ENCODE measurements at regions of chr3 and their contacts with region 1.

Region 1: DNA sequence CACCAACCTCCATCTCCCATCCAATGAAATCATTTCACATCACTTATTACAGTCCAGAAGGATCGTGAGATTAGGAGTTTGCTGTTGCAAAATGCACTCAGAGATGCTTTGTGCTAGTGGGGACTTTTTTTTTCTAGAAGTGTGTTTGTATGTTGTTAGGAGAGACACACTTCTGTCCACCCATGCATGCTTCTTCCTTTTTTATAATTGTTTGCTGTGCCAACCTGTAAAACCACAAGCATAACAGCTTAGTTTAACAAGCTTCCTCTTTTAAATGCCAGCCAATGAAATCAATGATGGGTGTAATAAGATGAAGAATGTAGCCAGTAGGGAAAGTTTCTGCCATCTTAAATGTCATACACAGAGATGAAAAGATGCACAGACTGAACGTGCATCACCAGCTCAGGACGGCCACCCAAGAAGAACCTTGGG is 305.6 kb upstream of the STT3B start:
- DNase-seq: peak; percentile 96
- H3K4me3 ChIP-seq: peak overlapping the region; percentile 57
- H3K27ac ChIP-seq: peak overlapping the region; percentile 100
- H3K4me1 ChIP-seq: peaks cover 98% of the 10 kb centered on the region
- CTCF ChIP-seq: no peak

Region 2: DNA sequence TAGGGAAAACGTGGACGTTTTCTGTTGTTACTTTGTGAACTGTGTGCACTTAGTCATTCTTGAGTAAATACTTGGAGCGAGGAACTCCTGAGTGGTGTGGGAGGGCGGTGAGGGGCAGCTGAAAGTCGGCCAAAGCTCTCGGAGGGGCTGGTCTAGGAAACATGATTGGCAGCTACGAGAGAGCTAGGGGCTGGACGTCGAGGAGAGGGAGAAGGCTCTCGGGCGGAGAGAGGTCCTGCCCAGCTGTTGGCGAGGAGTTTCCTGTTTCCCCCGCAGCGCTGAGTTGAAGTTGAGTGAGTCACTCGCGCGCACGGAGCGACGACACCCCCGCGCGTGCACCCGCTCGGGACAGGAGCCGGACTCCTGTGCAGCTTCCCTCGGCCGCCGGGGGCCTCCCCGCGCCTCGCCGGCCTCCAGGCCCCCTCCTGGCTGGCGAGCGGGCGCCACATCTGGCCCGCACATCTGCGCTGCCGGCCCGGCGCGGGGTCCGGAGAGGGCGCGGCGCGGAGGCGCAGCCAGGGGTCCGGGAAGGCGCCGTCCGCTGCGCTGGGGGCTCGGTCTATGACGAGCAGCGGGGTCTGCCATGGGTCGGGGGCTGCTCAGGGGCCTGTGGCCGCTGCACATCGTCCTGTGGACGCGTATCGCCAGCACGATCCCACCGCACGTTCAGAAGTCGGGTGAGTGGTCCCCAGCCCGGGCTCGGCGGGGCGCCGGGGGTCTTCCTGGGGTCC is 620.7 kb before region 1 on chr3 and contains the start of gene TGFBR2:
- CTCF ChIA-PET with region 1: no interaction called
- POLR2A ChIA-PET with region 1: interaction called, 3 read pairs
- intact Hi-C with region 1: loop called (anchors 10 kb)
- DNase-seq: peak; percentile 91
- H3K4me3 ChIP-seq: peak within 1 kb of the TSS; percentile 94
- H3K27ac ChIP-seq: peak within 1 kb of the TSS; percentile 93
- H3K4me1 ChIP-seq: peaks cover 72% of the 10 kb centered on the region
- CTCF ChIP-seq: no peak; the same call in 1 of the 2 replicates
- total RNA-seq, gene TGFBR2: 28.1 and 29.6 TPM in 2 replicates

Region 3: GRCh38 chr3:31213869-31214486 is 13.2 kb before region 1 on chr3:
- CTCF ChIA-PET with region 1: interaction called, 8 read pairs
- POLR2A ChIA-PET with region 1: interaction called, 102 read pairs
- intact Hi-C with region 1: loop called (anchors 1 kb)
- DNase-seq: peak; percentile 79
- H3K4me3 ChIP-seq: peak overlapping the region; percentile 44
- H3K27ac ChIP-seq: peak overlapping the region; percentile 86
- H3K4me1 ChIP-seq: peaks cover 71% of the 10 kb centered on the region
- CTCF ChIP-seq: no peak

Region 4: GRCh38 chr3:31242026-31242960 is 15.1 kb after region 1 on chr3:
- CTCF ChIA-PET with region 1: interaction called, 4 read pairs
- POLR2A ChIA-PET with region 1: interaction called, 35 read pairs
- intact Hi-C with region 1: no loop called
- DNase-seq: no peak
- H3K4me3 ChIP-seq: no peak overlapping the region
- H3K27ac ChIP-seq: no peak overlapping the region
- H3K4me1 ChIP-seq: peaks cover 33% of the 10 kb centered on the region
- CTCF ChIP-seq: no peak